ENCODE measurements at regions of chr13 and their contacts with region 1.

Region 1: DNA sequence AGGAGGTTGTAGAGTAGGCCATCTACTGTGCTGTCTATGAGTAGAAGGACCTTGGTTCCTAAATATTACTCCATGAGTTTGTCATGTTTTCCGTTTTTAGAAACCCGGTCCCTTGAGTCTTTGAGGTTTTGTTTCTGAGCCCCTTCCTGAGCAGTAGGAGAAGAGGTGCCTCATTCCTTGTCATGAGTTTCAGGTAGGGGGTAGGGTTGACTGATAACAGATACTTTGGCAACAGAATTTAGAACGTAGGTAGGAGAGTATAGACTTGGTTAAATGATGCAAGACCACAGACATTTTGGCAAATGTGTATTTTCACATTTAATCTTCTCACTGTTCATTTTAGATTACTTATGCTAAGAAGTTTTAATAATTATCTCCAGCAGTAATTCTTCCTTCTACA is 24.6 kb downstream of the LMO7 start:
- DNase-seq: no peak
- ATAC-seq: no peak
- H3K4me3 ChIP-seq: no peak overlapping the region
- H3K27ac ChIP-seq: no peak overlapping the region
- H3K4me1 ChIP-seq: peaks cover 12% of the 10 kb centered on the region
- H3K27me3 ChIP-seq: no peaks in the 10 kb centered on the region
- CTCF ChIP-seq: no peak
- EP300 ChIP-seq: no peak
- POLR2A ChIP-seq: no peak
- RAD21 ChIP-seq: no peak

Region 2: DNA sequence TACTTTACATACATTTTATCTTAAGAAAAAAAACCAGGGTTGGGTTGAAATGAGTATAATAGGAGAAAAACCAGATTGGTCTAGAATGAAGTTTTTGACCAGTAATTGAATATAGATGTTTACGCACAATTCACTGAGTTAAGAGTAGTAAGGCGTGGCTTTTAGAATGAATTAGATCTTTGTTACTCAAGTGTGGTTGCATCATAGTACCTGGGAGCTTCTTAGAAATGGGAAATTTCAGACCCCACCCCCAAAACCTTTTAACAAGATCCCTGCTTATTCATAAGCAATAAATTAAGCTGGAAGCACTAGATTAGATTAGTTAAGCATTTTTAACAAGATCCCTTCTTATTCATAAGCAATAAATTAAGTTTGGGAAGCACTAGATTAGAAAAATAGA is 53.2 kb before region 1 on chr13:
- CTCF ChIA-PET with region 1: no interaction called
- POLR2A ChIA-PET with region 1: no interaction called
- in situ Hi-C with region 1: loop called (anchors 5 kb)
- intact Hi-C with region 1: loop called (anchors 5 kb)
- DNase-seq: peak; percentile 6
- ATAC-seq: no peak
- H3K4me3 ChIP-seq: no peak overlapping the region
- H3K27ac ChIP-seq: no peak overlapping the region
- H3K4me1 ChIP-seq: no peaks in the 10 kb centered on the region; the same call in 1 of the 2 replicates
- H3K27me3 ChIP-seq: no peaks in the 10 kb centered on the region
- CTCF ChIP-seq: no peak
- EP300 ChIP-seq: no peak
- POLR2A ChIP-seq: no peak
- RAD21 ChIP-seq: no peak

Region 3: GRCh38 chr13:75803164-75803611 is 142.5 kb after region 1 on chr13:
- CTCF ChIA-PET with region 1: no interaction called
- POLR2A ChIA-PET with region 1: no interaction called
- in situ Hi-C with region 1: no loop called
- intact Hi-C with region 1: no loop called
- DNase-seq: no peak
- ATAC-seq: peak; percentile 66
- H3K4me3 ChIP-seq: no peak overlapping the region
- H3K27ac ChIP-seq: no peak overlapping the region
- H3K4me1 ChIP-seq: peaks cover 11% of the 10 kb centered on the region
- H3K27me3 ChIP-seq: no peaks in the 10 kb centered on the region
- CTCF ChIP-seq: no peak
- EP300 ChIP-seq: no peak
- POLR2A ChIP-seq: no peak
- RAD21 ChIP-seq: no peak